ENCODE measurements at regions of chr7 and their contacts with region 1.

Region 1: DNA sequence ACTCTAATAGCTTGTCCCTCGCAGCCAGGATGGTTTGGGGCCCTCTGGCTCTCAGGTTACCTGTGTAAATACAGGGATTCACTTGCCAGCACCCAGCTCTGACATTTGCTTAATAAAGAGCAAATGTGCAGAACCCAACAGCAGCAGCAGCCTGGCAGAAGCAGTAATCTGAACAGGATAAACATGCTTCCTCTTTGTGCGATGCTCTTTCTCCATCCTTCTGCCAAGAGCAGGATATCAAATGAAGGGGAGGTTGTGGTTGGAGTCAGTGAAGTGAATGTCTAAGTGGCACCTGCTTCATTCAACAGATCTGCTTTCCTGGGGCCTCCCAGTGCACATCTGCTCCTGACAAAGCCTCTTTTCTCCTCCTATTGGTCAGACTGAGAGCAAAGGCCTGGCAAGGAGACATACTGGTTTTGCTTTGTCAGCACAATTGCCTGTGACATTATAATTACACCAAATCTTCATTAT is 130.3 kb downstream of the NRF1 start:
- DNase-seq: peak in 1 of 2 donors; percentile 32
- H3K4me3 ChIP-seq: no peak overlapping the region
- H3K27ac ChIP-seq: no peak overlapping the region
- H3K4me1 ChIP-seq: peaks cover 0 to 34% (median 0%) of the 10 kb centered on the region in 4 donors
- H3K27me3 ChIP-seq: no peaks in the 10 kb centered on the region
- CTCF ChIP-seq: no peak
- EP300 ChIP-seq: no peak
- POLR2A ChIP-seq: no peak

Region 2: DNA sequence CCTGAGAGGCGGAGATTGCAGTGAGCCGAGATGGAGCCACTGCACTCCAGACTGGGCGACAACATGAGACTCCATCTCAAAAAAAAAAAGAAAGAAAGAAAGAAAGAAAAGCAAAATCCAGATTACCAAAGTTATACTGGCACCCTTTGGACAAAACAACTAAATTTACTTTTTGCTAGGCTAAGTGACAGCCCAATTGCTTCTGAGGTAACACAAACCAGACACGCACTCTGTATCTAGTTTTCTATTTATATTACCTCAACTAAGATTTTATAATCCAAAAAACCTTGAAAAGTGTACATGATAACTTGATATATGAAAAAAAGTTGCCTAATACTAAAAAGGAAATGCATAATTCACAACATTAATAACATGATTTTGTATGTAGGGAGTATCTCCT is 198.1 kb after region 1 on chr7:
- intact Hi-C with region 1: loop called (anchors 5 kb)
- DNase-seq: no peak
- H3K4me3 ChIP-seq: no peak overlapping the region
- H3K27ac ChIP-seq: no peak overlapping the region
- H3K4me1 ChIP-seq: peaks cover 0 to 74% (median 20%) of the 10 kb centered on the region in 4 donors
- H3K27me3 ChIP-seq: no peaks in the 10 kb centered on the region
- CTCF ChIP-seq: no peak
- EP300 ChIP-seq: no peak
- POLR2A ChIP-seq: no peak

Measured in stomach (tissue), 19 donors.